ENCODE measurements at regions of chr1 and their contacts with region 1.

Region 1: DNA sequence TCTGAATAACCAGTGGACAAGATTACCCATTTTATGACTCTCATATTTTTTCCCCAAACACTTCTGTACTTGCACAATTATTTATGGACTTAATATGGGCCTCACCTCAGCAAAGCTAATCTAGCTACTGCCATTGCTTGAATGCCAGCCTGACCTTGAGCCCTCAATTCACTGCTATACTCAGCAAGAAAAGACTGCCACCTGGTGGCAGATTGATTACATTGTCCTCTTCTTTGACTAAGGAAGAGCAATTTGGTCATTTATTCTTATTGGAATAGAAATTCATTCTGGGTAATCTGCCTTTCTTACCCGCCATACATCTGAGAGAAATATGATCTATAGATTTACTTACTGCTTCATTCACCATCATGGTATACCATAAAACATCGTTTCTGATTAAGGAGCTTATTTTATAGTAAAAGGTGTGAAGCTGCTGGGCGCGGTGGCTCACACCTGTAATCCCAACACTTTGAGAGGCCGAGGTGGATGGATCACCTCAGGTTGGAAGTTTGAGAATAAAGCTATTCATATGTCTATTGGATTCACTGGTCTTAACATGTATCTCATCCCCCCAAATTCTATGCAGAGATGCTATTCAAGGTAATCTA is 32.9 kb upstream of the DIPK1A start:
- DNase-seq: peak; percentile 81 to 85
- H3K4me3 ChIP-seq: no peak overlapping the region
- H3K4me1 ChIP-seq: no peaks in the 10 kb centered on the region
- H3K27me3 ChIP-seq: peaks cover 51% of the 10 kb centered on the region

Region 2: DNA sequence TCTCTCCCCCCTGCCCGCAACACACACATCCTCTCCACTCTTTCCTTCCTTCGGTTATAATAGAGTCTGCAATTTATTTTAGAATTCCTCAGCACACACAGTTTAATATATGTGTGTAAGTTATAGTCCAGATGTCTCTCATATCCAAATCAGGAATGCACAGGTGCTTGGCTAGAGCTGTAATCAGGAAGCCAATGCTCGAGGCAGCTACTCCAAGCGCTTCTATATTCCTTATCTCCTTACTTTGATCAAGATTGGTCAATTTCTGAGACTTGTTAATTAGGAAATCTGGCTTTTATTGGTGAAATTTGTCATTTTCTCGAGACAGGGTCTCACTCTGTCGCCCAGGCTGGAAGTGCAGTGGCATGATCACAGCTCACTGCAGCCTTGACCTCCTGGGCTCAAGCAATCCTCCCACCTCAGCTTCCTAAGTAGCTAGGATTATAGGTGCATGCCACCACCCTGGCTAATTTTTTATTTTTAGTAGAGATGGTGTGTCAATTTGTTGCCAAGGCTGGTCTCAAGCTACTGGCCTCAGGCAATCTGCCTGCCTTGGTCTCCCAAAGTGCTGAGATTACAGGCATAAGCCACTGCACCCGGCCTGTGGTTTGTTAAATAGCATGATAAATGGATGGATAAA is 134.7 kb before region 1 on chr1:
- in situ Hi-C with region 1: loop called (anchors 5 kb)
- DNase-seq: no peak
- H3K4me3 ChIP-seq: no peak overlapping the region
- H3K4me1 ChIP-seq: 0 out of 2 replicates have a peak, but pooled peaks cover 3% of the 10 kb centered on the region
- H3K27me3 ChIP-seq: no peaks in the 10 kb centered on the region; the same call in none of the 2 replicates

Region 3: DNA sequence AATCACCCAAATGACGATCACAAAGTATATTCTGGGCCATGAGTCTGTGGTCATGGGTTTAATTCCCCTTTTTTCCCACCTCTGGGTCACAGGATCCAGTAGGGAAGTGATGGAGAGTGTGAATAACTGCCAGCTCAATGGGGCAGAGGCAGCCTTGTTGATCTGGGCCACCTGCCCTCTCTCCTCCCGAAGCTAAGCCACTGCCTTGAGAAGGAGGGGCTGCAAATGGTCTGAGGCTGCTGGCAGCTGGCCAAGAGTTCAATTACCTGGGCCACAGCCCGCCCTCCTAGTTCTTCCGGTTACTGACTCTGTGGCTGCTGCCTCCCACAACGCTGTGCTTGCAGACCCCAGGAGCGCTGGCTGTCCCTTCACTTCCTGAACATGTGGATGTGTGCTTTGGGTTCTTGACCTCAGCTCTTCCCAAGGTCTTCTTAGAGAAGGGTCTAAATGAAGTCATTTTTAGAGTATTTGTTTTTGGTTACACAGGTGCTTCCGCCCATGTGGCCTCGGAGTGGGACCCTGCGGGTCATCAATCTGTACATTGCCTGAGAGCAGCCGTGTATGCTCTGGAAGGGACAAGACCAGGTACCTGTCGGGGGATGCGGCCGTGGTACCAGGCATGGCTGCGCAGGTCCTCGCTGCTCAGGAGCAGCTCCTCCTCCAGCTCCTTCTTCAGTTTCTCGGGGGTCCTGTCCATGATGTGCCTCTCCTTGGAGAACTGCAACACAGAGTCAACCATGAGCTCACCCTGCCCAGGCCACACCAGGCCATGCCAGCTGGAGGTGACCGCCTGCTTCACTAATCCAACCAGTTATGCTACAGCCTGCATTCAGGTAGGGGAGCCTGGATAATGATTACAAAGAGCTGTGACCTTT is 597.7 kb after region 1 on chr1:
- in situ Hi-C with region 1: no loop called
- DNase-seq: peak in 1 of 2 experiments; percentile 32
- H3K4me3 ChIP-seq: no peak overlapping the region
- H3K4me1 ChIP-seq: no peaks in the 10 kb centered on the region
- H3K27me3 ChIP-seq: no peaks in the 10 kb centered on the region

Measured in HAP-1 (cell line).